Body of pancreas (tissue), 4 donors: ENCODE measurements at regions of chr17 and their contacts with region 1.

Region 1: DNA sequence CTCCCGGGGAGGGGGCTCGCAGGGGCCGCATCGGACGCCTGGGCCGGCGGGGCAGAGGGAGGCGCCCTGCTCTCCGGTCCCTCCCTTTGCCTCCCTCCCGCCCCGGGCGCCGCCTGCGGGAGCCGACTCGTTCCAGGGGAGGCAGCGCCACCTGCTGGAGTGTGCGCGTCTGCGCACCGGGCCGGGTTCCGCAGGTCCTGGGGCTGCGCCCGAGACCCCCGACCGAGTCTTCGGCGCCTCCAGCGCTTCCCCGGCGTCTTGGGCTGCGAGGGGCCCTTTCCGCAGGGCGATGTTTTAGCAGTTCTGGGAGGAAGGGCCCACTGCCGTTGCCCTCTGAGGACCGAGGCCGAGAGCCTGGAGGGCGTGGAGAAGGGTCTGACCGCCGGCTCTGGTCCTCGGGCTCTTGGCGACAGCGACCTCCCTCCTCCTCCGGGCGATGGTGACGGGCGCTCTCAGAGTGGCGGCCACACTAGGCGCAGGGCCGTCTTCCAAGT is 106.3 kb downstream of the SEC14L1 start:
- DNase-seq: peak; percentile 81 to 88 (median 86)
- ATAC-seq: peak; percentile 91
- H3K4me3 ChIP-seq: peak overlapping the region; percentile 35 to 57
- H3K27ac ChIP-seq: peak overlapping the region in 1 of 4 donors; percentile 49
- H3K4me1 ChIP-seq: peaks cover 12% of the 10 kb centered on the region
- H3K27me3 ChIP-seq: no peaks in the 10 kb centered on the region
- CTCF ChIP-seq: peak; percentile 93 to 99 (median 97)
- POLR2A ChIP-seq: no peak

Region 2: GRCh38 chr17:77088455-77089123 is 158.5 kb before region 1 on chr17:
- intact Hi-C with region 1: loop called (anchors 5 kb)
- DNase-seq: peak; percentile 83 to 94 (median 90)
- ATAC-seq: peak; percentile 89
- H3K4me3 ChIP-seq: peak overlapping the region; percentile 69 to 84
- H3K27ac ChIP-seq: peak overlapping the region; percentile 68 to 90 (median 78)
- H3K4me1 ChIP-seq: peaks cover 43% of the 10 kb centered on the region
- H3K27me3 ChIP-seq: no peaks in the 10 kb centered on the region
- CTCF ChIP-seq: peak; percentile 18 to 77 (median 62)
- POLR2A ChIP-seq: peak in 2 of 3 donors; percentile 78 to 85

Region 3: GRCh38 chr17:77304051-77304745 is 57.1 kb after region 1 on chr17:
- intact Hi-C with region 1: no loop called
- DNase-seq: no peak
- ATAC-seq: no peak
- H3K4me3 ChIP-seq: no peak overlapping the region
- H3K27ac ChIP-seq: peak overlapping the region in 3 of 4 donors; percentile 22 to 73 (median 67)
- H3K4me1 ChIP-seq: peaks cover 50% of the 10 kb centered on the region
- H3K27me3 ChIP-seq: no peaks in the 10 kb centered on the region
- CTCF ChIP-seq: no peak
- POLR2A ChIP-seq: no peak